ENCODE measurements at regions of chr3 and their contacts with region 1.

Region 1: GRCh38 chr3:143644370-143645089 is 203.7 kb downstream of the SLC9A9 start:
- DNase-seq: peak; percentile 42
- CTCF ChIP-seq: peak; percentile 50

Region 2: GRCh38 chr3:143121241-143122088 is 523.1 kb before region 1 on chr3:
- in situ Hi-C with region 1: loop called (anchors 10 kb)
- DNase-seq: peak; percentile 74
- CTCF ChIP-seq: peak; percentile 69

Region 3: DNA sequence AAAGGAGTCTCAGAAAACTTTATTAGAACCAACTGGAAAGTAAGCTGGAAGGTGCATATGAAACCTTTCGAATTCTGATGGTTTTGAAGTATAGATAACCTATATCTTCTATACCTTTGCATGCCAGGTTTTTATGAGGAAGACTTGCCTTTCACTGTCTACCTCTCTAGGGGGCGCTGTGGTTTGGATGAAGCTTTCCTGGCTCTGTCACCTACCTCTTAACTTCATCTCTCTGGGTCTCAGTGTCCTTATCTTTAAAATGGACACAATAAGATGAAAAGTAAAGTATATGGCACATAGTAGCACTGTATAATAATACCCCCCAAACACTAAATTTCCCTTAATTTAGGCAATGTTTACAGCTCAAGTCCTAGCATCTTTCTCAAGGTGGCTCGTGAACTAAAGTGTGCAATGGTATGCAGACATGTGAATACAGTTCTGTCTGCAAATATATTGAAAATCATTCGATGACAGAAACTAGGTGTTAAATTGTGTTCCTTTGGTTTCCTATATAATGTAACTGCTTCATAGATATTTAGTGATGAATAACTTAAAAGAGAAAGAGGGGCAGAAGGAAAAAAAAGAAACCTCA is 210.6 kb before region 1 on chr3:
- in situ Hi-C with region 1: loop called (anchors 10 kb)
- DNase-seq: peak; percentile 19
- CTCF ChIP-seq: peak; percentile 74

Region 4: DNA sequence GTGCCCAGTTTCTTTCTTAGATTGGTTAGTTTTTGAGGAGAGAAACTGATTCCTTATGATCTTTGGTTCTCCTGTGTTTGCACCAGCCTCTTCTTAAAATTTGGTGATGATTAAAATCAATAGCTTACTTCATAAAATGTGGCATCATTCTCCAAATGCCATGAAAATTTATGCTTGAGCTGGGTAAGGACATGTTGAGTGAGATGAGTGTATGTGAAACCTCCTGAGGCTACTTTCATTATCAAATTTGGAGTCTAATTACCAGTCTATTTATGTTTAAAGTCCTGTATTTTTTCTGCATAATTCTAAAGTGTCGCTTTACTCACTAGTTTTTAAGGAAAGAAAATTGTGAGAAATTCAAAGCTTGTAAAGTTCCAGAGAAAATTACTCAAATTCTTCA is 429.2 kb after region 1 on chr3:
- in situ Hi-C with region 1: no loop called
- DNase-seq: no peak
- CTCF ChIP-seq: no peak

Measured in GM13977 (cell line).